IMR-90 (cell line): ENCODE measurements at regions of chr9 and their contacts with region 1.

Region 1: DNA sequence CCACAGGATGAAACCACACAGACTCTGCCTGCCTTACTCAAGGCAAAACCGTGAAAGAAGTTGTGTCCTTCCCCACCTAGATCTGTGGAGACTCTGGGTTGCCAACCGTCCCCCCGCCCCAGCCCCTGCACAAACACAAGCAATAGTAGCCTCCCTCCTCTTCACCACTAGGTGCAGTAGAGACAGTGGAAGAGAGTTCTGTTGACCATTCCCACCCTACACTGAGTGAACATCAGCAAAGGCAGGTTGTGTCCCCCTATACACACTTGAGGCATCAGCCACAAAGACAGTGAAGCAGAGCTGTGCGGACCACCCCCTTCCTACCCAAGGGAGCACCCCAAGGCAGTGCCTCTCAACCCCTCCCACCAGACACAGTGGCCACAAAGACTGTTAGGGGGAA is 223.7 kb upstream of the NFIL3 start:
- DNase-seq: no peak
- ATAC-seq: no peak
- H3K4me3 ChIP-seq: no peak overlapping the region
- H3K27ac ChIP-seq: no peak overlapping the region
- H3K4me1 ChIP-seq: peaks cover 2% of the 10 kb centered on the region; the same call in 1 of the 2 replicates
- H3K27me3 ChIP-seq: peaks cover 6% of the 10 kb centered on the region
- CTCF ChIP-seq: no peak
- POLR2A ChIP-seq: no peak
- RAD21 ChIP-seq: no peak

Region 2: GRCh38 chr9:91023741-91024140 is 623.6 kb before region 1 on chr9:
- CTCF ChIA-PET with region 1: no interaction called
- POLR2A ChIA-PET with region 1: no interaction called
- dilution Hi-C with region 1: no loop called
- in situ Hi-C with region 1: no loop called
- intact Hi-C with region 1: loop called (anchors 5 kb)
- DNase-seq: no peak
- ATAC-seq: no peak
- H3K4me3 ChIP-seq: no peak overlapping the region
- H3K27ac ChIP-seq: no peak overlapping the region
- H3K4me1 ChIP-seq: no peaks in the 10 kb centered on the region
- H3K27me3 ChIP-seq: no peaks in the 10 kb centered on the region
- CTCF ChIP-seq: no peak
- POLR2A ChIP-seq: no peak
- RAD21 ChIP-seq: no peak

Region 3: GRCh38 chr9:91623004-91623403 is 24.4 kb before region 1 on chr9:
- CTCF ChIA-PET with region 1: no interaction called
- POLR2A ChIA-PET with region 1: no interaction called
- dilution Hi-C with region 1: no loop called
- in situ Hi-C with region 1: no loop called
- intact Hi-C with region 1: loop called (anchors 1 kb)
- DNase-seq: no peak
- ATAC-seq: no peak
- H3K4me3 ChIP-seq: no peak overlapping the region
- H3K27ac ChIP-seq: no peak overlapping the region
- H3K4me1 ChIP-seq: no peaks in the 10 kb centered on the region
- H3K27me3 ChIP-seq: peaks cover 3% of the 10 kb centered on the region; the same call in 1 of the 2 replicates
- CTCF ChIP-seq: no peak
- POLR2A ChIP-seq: no peak
- RAD21 ChIP-seq: no peak

Region 4: DNA sequence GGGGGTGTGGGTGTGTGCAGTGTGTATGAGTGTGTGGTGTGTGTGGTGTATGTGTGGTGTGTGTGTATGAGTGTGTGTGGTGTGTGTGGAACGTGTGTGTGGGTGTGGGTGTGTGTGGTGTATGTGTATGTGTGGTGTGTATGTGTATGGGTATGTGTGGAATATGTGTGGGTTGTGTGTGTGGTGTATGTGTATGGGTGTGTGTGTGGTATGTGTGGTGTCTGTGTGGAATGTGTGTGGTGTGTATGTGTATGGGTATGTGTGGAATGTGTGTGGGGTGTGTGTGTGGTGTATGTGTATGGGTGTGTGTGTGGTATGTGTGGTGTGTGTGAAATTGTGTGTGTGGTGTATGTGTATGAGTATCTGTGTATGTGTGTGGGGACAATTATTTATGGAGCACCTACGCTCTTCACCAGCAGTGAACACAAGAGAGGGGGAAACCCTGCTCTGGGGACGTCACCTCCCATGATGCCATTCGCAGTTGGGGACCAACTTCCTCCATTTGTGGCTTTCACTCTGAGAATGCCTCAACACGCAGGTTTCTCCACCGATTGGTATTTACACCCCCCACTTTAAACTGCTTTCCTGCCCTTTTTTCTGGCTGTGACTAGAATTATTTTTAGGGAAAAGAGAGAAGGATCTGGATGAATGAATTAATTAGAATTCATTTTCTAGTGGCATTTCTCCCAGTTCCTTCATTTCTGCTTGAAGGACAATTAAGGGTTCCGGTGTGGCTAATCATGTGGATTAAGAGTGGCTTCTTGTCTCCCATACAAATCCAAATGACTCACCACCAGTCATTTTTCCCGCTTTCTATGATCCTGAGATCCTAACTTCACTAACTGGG is 64.6 kb after region 1 on chr9:
- CTCF ChIA-PET with region 1: no interaction called
- POLR2A ChIA-PET with region 1: no interaction called
- dilution Hi-C with region 1: no loop called
- in situ Hi-C with region 1: no loop called
- intact Hi-C with region 1: no loop called
- DNase-seq: peak; percentile 37
- ATAC-seq: no peak; the same call in 1 of the 2 replicates
- H3K4me3 ChIP-seq: no peak overlapping the region
- H3K27ac ChIP-seq: no peak overlapping the region
- H3K4me1 ChIP-seq: peaks cover 2% of the 10 kb centered on the region; the same call in 1 of the 2 replicates
- H3K27me3 ChIP-seq: no peaks in the 10 kb centered on the region
- CTCF ChIP-seq: no peak
- POLR2A ChIP-seq: no peak
- RAD21 ChIP-seq: no peak